AG04449 (cell line): ENCODE measurements at regions of chr12 and their contacts with region 1.

Region 1: GRCh38 chr12:59113831-59114615 is 193.7 kb upstream of the LRIG3 start:
- DNase-seq: peak; percentile 42
- H3K4me3 ChIP-seq: no peak overlapping the region
- CTCF ChIP-seq: peak; percentile 89

Region 2: DNA sequence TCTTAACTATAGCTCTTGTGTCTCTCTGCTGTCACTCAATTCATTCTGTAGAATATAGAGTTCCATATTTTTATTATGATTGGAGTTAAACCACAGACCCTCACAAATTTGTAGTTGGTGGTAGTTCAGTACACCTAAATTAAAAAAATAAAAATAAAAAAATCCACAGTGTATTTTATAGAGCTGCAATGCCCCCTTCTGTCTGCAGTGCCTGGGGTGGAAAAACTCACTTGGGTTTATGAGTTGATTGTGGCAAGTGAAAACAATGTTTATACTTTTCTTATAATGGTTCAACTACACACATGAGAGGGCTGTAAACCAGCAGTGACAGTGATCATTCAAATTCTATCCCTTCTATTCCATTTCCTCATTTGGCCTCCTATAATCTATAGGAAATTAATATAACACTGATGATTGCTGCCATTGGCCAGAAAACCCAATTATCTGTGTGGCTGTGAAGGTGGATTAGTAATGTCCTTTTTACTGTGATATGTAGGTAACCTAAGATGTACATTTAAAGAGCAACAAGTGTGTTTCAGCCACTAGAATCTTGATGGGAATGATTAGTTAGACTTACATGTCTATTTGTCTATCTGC is 26.8 kb before region 1 on chr12:
- CTCF ChIA-PET with region 1: interaction called, 18 read pairs
- POLR2A ChIA-PET with region 1: no interaction called
- DNase-seq: no peak
- H3K4me3 ChIP-seq: no peak overlapping the region
- CTCF ChIP-seq: peak; percentile 58

Region 3: GRCh38 chr12:59100585-59100984 is 13.4 kb before region 1 on chr12:
- CTCF ChIA-PET with region 1: interaction called, 37 read pairs
- POLR2A ChIA-PET with region 1: no interaction called
- DNase-seq: no peak
- H3K4me3 ChIP-seq: no peak overlapping the region
- CTCF ChIP-seq: no peak

Region 4: DNA sequence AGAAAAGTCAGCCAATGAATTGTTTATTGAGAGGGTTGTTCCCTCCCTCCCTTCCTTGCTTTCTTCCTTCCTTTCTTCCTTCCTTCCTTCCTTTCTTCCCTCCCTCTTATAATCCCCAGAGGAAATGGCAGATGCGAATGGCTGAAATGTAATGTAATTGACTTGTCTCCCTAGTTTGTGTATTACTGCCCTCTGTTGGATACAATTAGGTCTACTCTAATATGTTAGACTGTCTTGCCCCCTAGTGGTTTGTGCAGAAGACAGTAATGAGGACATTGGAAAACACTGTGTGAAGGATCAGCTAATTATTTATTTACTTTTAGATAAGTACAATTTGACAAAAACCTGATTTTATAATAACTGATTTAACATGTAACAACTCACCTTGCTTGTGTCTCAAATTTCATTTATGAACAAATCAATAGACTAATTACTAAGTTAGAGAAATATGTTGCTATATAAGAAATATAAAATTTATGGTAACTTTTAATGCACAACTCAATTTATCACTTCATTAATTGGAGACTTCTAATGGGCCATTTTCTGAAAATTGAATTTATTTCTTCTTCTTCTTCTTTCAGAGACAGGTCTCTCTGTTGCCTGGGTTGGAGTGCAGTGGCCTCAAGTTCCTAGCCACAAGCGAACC is 36.1 kb after region 1 on chr12:
- CTCF ChIA-PET with region 1: interaction called, 123 read pairs
- POLR2A ChIA-PET with region 1: no interaction called
- DNase-seq: peak; percentile 38
- H3K4me3 ChIP-seq: no peak overlapping the region
- CTCF ChIP-seq: peak; percentile 83

Region 5: DNA sequence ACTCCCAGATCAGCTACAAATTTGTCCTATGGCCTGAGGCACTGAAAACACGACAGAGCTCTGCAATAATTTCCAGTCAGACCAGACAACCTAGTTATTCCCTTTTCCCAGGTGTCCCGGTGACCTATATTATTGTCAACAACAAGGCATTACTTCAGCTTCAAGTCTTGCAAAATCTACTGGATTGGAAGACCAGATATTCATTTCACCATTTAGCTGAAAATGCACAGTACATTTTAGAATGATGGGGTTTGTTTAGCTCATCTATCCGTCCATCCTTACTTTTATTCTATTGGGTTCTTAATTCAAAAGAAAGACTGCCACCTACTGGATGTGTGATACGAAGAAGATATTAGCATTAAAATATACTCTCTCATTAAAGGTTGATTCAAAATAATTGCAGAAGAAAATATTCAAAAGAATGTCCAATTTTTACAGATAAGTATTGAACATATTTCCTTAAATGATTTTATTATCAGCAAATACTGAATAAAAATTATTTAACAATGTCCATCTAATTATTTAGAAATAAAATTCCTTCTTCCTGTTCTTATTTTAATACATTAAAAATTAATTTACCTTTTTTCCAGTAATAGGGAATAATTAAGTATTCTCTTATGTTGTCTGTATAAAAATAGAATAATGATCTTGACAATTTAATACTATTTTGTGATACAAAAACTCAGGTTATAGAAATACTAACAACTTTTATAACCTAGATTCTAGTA is 51.1 kb after region 1 on chr12:
- CTCF ChIA-PET with region 1: interaction called, 161 read pairs
- POLR2A ChIA-PET with region 1: no interaction called
- DNase-seq: no peak
- H3K4me3 ChIP-seq: no peak overlapping the region
- CTCF ChIP-seq: peak; percentile 15

Region 6: GRCh38 chr12:59381106-59381505 is 267.1 kb after region 1 on chr12:
- CTCF ChIA-PET with region 1: no interaction called
- POLR2A ChIA-PET with region 1: no interaction called
- DNase-seq: no peak
- H3K4me3 ChIP-seq: no peak overlapping the region
- CTCF ChIP-seq: no peak